Activated naive CD4-positive, alpha-beta T cell treated with anti-CD3 and anti-CD28 coated beads for 36 hours (primary cell): ENCODE measurements at regions of chr5 and their contacts with region 1.

Region 1: DNA sequence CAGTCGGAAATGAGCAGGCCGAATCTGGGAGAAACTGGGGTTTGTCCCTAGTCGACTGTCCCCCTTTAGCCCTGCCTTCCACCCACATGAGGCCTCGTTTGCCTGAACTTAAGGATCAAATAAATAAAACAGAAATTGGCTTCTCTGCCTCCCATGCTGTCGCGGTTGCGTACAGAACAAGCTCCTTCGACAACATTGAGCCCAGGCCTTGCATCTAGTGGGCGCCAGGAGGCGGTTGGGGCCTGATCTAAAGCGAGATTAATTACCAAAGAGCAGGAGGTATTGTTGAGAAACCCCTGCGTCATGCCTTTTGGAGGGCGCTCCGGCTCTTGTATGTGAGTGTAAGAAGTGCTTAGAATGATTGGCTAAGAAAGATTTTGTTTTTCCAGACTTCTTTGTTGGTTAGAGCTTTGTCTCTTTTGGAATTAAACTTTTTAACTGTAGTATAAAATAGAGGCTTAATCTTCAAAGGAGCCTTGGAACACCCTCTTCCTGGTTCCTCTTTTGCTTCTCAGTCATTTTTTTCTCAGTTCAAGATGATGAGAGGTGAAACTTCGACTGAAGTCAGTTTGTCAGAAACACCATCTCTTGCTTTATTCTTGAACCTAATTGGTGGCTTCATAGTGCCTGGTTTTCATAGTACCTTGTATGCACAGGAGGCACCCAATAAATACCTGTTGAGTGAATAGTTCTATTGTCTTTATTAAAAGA is 827 bp downstream of the ATP6V0E1 start:
- DNase-seq: peak; percentile 91
- H3K4me3 Mint-ChIP-seq: peak overlapping the region; percentile 97
- H3K27ac Mint-ChIP-seq: peak overlapping the region; percentile 97
- H3K4me1 Mint-ChIP-seq: peaks cover 38% of the 10 kb centered on the region
- H3K27me3 Mint-ChIP-seq: no peaks in the 10 kb centered on the region

Region 2: GRCh38 chr5:172800088-172800551 is 184.3 kb before region 1 on chr5:
- CTCF ChIA-PET with region 1: no interaction called
- intact Hi-C with region 1: no loop called
- DNase-seq: no peak
- H3K4me3 Mint-ChIP-seq: no peak overlapping the region
- H3K27ac Mint-ChIP-seq: no peak overlapping the region
- H3K4me1 Mint-ChIP-seq: peaks cover 6% of the 10 kb centered on the region
- H3K27me3 Mint-ChIP-seq: no peaks in the 10 kb centered on the region

Region 3: DNA sequence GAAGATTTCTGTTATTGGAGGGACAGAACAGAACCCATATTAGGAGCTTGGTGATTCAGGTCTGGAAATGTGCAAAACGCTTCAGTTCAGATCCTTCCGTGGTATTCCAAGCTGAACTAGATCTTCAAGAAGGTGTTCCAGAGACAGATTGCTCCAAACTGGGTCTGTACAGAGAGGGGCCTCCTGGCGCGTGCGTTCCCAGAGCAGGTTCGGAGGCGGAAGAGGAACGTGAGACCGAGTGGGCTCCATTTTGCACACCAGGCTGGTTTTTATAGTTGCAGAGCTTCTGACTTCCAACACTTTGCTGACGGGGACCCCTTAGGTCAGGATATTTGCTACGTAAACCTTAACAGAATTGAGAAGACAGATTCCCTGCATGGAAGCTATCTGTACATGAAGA is 41.8 kb before region 1 on chr5:
- CTCF ChIA-PET with region 1: no interaction called
- intact Hi-C with region 1: no loop called
- DNase-seq: no peak
- H3K4me3 Mint-ChIP-seq: no peak overlapping the region
- H3K27ac Mint-ChIP-seq: no peak overlapping the region
- H3K4me1 Mint-ChIP-seq: no peaks in the 10 kb centered on the region
- H3K27me3 Mint-ChIP-seq: no peaks in the 10 kb centered on the region

Region 4: DNA sequence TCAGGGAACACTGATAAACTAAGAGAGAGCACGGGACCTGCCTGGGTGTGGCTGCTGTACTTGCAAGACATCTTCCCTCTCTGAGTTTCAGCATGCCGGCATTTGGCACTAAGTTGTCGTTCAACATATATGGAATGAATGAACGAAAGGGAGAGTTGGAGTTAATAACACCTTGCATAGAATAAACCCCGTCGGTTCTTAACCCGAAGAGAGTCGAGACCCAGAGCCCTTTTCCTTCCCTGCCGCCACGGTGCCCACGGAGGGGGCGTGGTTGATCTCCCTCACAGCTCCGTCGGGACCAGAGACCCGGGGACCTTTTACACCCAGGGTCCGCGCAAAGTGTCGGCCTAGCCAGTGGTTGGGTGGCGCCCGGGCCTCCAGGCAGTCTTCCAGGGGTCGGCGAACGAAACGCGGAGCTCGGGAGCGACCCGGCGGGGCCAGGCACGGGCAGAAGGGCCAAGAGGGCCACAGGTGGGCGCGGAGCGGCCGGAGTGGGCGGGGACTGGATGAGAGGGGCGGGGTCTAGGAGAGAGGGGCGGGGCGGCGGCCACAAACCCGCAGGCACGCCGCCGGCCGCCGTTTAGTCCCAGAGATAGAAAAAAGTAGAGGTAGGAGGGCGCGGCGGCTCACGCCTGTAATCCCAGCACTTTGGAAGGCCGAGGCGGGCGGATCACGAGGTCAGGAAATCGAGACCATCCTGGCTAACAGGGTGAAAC is 25.9 kb before region 1 on chr5:
- CTCF ChIA-PET with region 1: interaction called, 3 read pairs
- intact Hi-C with region 1: loop called (anchors 1 kb)
- DNase-seq: peak; percentile 60
- H3K4me3 Mint-ChIP-seq: peak overlapping the region; percentile 93
- H3K27ac Mint-ChIP-seq: peak overlapping the region; percentile 86
- H3K4me1 Mint-ChIP-seq: peaks cover 16% of the 10 kb centered on the region
- H3K27me3 Mint-ChIP-seq: no peaks in the 10 kb centered on the region

Region 5: DNA sequence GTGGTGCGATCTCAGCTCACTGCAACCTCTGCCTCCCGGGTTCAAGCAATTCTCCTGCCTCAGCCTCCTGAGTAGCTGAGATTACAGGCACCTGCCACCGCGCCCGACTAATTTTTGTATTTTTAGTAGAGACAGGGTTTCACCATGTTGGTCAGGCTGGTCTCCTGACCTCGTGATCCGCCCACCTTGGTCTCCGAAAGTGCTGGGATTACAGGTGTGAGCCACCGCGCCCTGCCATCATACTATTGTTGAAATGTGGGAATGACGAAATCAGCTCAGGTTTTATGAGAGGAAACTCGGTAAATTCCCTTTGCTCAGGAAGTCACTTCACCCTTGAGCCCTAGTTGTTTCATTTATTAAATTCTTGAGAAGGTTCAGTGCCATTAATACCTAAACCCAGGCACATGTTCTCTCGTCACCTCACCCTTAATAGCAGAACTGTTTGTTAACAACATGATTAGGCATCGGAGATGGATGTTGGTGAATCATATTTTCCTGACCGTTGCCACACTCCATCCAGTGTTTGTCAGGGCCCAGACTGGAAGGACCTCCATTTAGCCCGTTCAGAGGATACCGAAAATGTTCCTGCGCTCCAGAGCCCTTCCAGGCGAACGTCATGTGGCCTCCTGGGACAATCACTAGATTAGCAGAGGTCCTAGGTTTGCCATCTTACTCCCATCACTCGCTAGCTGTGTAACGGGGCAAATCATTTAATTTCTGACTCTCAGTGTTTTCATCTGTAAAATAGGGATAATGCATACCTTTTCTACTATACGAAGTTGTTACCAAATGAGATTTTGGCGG is 51.7 kb after region 1 on chr5:
- CTCF ChIA-PET with region 1: interaction called, 17 read pairs
- intact Hi-C with region 1: loop called (anchors 1 kb)
- DNase-seq: peak; percentile 72
- H3K4me3 Mint-ChIP-seq: peak overlapping the region; percentile 74
- H3K27ac Mint-ChIP-seq: peak overlapping the region; percentile 97
- H3K4me1 Mint-ChIP-seq: peaks cover 63% of the 10 kb centered on the region
- H3K27me3 Mint-ChIP-seq: no peaks in the 10 kb centered on the region

Region 6: DNA sequence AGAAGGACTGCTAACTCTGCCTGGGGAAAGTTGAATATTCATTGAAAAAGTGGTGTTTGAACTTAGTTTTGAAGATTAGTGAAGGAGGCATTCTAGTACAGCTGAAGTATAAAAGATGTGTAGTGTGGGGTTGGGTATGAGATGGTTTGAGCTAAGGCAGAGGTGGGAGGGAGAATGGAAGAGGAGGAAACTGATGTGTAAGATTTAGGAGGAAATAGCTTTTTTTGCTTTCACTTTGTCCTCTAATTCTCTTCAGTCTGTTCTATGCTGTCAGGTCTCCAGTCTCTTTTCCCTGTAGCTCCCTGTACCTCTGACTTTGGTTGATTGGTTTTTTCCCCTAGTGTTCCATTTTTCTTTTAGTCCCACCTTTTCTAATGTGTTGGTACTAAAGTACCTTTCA is 80.8 kb after region 1 on chr5:
- CTCF ChIA-PET with region 1: interaction called, 10 read pairs
- intact Hi-C with region 1: loop called (anchors 2 kb)
- DNase-seq: no peak
- H3K4me3 Mint-ChIP-seq: peak overlapping the region; percentile 66
- H3K27ac Mint-ChIP-seq: peak overlapping the region; percentile 85
- H3K4me1 Mint-ChIP-seq: peaks cover 83% of the 10 kb centered on the region
- H3K27me3 Mint-ChIP-seq: no peaks in the 10 kb centered on the region

Region 7: GRCh38 chr5:173204185-173204979 is 220.0 kb after region 1 on chr5:
- CTCF ChIA-PET with region 1: interaction called, 11 read pairs
- intact Hi-C with region 1: loop called (anchors 1 kb)
- DNase-seq: peak; percentile 50
- H3K4me3 Mint-ChIP-seq: no peak overlapping the region
- H3K27ac Mint-ChIP-seq: no peak overlapping the region
- H3K4me1 Mint-ChIP-seq: no peaks in the 10 kb centered on the region
- H3K27me3 Mint-ChIP-seq: peaks cover 32% of the 10 kb centered on the region

Region 8: GRCh38 chr5:173573126-173573960 is 588.9 kb after region 1 on chr5:
- CTCF ChIA-PET with region 1: no interaction called
- intact Hi-C with region 1: loop called (anchors 2 kb)
- DNase-seq: peak; percentile 70
- H3K4me3 Mint-ChIP-seq: no peak overlapping the region
- H3K27ac Mint-ChIP-seq: no peak overlapping the region
- H3K4me1 Mint-ChIP-seq: peaks cover 6% of the 10 kb centered on the region
- H3K27me3 Mint-ChIP-seq: peaks cover 13% of the 10 kb centered on the region